Naive thymus-derived CD4-positive, alpha-beta T cell (primary cell): ENCODE measurements at regions of chr14 and their contacts with region 1.

Region 1: DNA sequence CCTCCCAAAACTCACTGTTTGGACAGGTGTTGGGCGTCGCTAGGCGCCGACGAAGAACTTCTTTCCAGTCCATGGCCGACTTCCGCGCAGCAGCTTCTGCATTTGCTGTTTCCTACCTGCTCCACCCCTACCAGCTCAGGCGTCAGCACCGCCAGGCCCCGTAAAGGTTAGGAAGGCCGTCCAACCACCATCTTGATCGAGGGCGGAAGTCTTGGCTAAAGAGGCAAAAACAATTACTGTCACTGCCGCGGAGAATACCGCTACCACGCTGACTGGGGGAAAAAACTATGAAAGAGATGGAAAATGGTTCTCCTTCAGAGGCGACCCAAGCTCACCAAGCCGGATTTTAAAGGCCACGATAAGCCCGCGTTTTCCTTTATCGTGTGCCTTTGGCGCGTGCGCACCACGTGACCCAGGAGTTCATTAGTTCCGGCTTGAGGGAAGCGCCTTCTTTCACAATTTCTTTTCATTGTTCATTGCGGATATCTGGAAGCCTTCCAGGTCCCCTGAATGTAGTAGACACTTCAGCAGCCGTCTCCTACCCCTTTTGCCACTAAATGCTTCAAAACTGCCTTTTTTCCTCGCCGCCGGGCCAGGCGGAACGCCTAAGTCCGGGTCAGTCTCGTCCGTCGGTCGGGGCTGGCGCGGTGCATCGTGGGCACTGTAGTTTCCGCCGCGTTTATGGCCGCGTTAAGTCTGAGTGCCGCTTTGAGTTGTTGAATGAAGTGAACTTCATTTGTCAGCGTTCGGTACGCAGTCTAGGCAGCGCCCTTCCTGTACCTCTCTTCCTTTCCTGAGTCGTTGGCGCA is at the starts of genes PPP2R3C and PRORP:
- DNase-seq: peak; percentile 80 to 96 (median 93)
- ATAC-seq: peak; percentile 90
- H3K4me3 ChIP-seq: peak within 1 kb of the TSS; percentile 86
- H3K4me3 Mint-ChIP-seq: peak within 1 kb of the TSS; percentile 89 to 100 (median 99)
- H3K27ac ChIP-seq: peak within 1 kb of the TSS; percentile 97
- H3K27ac Mint-ChIP-seq: peak within 1 kb of the TSS; percentile 99 to 100 (median 100)
- H3K4me1 ChIP-seq: peaks cover 16 to 22% of the 10 kb centered on the region in 2 donors
- H3K4me1 Mint-ChIP-seq: peaks cover 39 to 85% (median 73%) of the 10 kb centered on the region in 7 donors
- H3K27me3 ChIP-seq: no peaks in the 10 kb centered on the region
- H3K27me3 Mint-ChIP-seq: peaks cover 0 to 3% (median 0%) of the 10 kb centered on the region in 5 donors
- total RNA-seq, gene PPP2R3C: 31.4 to 43.3 (median 33.5) TPM
- total RNA-seq, gene PRORP: 31.2 to 40.9 (median 38.4) TPM

Region 2: GRCh38 chr14:34554540-34555333 is 567.4 kb before region 1 on chr14:
- CTCF ChIA-PET with region 1: no interaction called
- POLR2A ChIA-PET with region 1: no interaction called
- intact Hi-C with region 1: no loop called
- DNase-seq: peak in 1 of 9 donors; percentile 34
- ATAC-seq: no peak
- H3K4me3 ChIP-seq: no peak overlapping the region
- H3K4me3 Mint-ChIP-seq: peak overlapping the region; percentile 42 to 85 (median 64)
- H3K27ac ChIP-seq: peak overlapping the region; percentile 1
- H3K27ac Mint-ChIP-seq: peak overlapping the region; percentile 48 to 94 (median 79)
- H3K4me1 ChIP-seq: no peaks in the 10 kb centered on the region
- H3K4me1 Mint-ChIP-seq: peaks cover 1 to 20% (median 17%) of the 10 kb centered on the region in 7 donors
- H3K27me3 ChIP-seq: no peaks in the 10 kb centered on the region
- H3K27me3 Mint-ChIP-seq: no peaks in the 10 kb centered on the region

Region 3: GRCh38 chr14:34629657-34630529 is 492.2 kb before region 1 on chr14 and contains the start of gene SNX6:
- CTCF ChIA-PET with region 1: no interaction called
- POLR2A ChIA-PET with region 1: interaction called, 5 read pairs
- intact Hi-C with region 1: loop called (anchors 1 kb)
- DNase-seq: peak; percentile 75 to 87 (median 83)
- ATAC-seq: peak; percentile 100
- H3K4me3 ChIP-seq: peak within 1 kb of the TSS; percentile 72
- H3K4me3 Mint-ChIP-seq: peak within 1 kb of the TSS; percentile 89 to 100 (median 98)
- H3K27ac ChIP-seq: peak within 1 kb of the TSS; percentile 98
- H3K27ac Mint-ChIP-seq: peak within 1 kb of the TSS; percentile 92 to 97 (median 96)
- H3K4me1 ChIP-seq: peaks cover 17 to 20% of the 10 kb centered on the region in 2 donors
- H3K4me1 Mint-ChIP-seq: peaks cover 6 to 49% (median 33%) of the 10 kb centered on the region in 7 donors
- H3K27me3 ChIP-seq: no peaks in the 10 kb centered on the region
- H3K27me3 Mint-ChIP-seq: peaks cover 0 to 18% (median 0%) of the 10 kb centered on the region in 5 donors
- total RNA-seq, gene SNX6: 56.6 to 78.9 (median 59.7) TPM

Region 4: GRCh38 chr14:35046048-35046741 is 75.9 kb before region 1 on chr14 and contains the start of gene FAM177A1:
- CTCF ChIA-PET with region 1: no interaction called
- POLR2A ChIA-PET with region 1: interaction called, 23 read pairs
- intact Hi-C with region 1: loop called (anchors 1 kb)
- DNase-seq: peak; percentile 89 to 100 (median 98)
- ATAC-seq: peak; percentile 94
- H3K4me3 ChIP-seq: peak within 1 kb of the TSS; percentile 80
- H3K4me3 Mint-ChIP-seq: peak within 1 kb of the TSS; percentile 88 to 99 (median 93)
- H3K27ac ChIP-seq: peak within 1 kb of the TSS; percentile 99
- H3K27ac Mint-ChIP-seq: peak within 1 kb of the TSS; percentile 96 to 100 (median 99)
- H3K4me1 ChIP-seq: peaks cover 11 to 19% of the 10 kb centered on the region in 2 donors
- H3K4me1 Mint-ChIP-seq: peaks cover 13 to 39% (median 34%) of the 10 kb centered on the region in 7 donors
- H3K27me3 ChIP-seq: no peaks in the 10 kb centered on the region
- H3K27me3 Mint-ChIP-seq: no peaks in the 10 kb centered on the region
- total RNA-seq, gene FAM177A1: 34.3 to 135 (median 41.7) TPM

Region 5: GRCh38 chr14:35201066-35201465 is 79.0 kb after region 1 on chr14:
- CTCF ChIA-PET with region 1: no interaction called
- POLR2A ChIA-PET with region 1: no interaction called
- intact Hi-C with region 1: loop called in 1 of 2 experiments (anchors 5 kb)
- DNase-seq: peak in 5 of 9 donors; percentile 7 to 30 (median 18)
- ATAC-seq: peak; percentile 48
- H3K4me3 ChIP-seq: no peak overlapping the region
- H3K4me3 Mint-ChIP-seq: peak overlapping the region in 9 of 10 donors; percentile 2 to 54 (median 34)
- H3K27ac ChIP-seq: peak overlapping the region; percentile 35
- H3K27ac Mint-ChIP-seq: peak overlapping the region in 8 of 9 donors; percentile 49 to 89 (median 68)
- H3K4me1 ChIP-seq: peaks cover 17 to 35% of the 10 kb centered on the region in 2 donors
- H3K4me1 Mint-ChIP-seq: peaks cover 23 to 52% (median 38%) of the 10 kb centered on the region in 7 donors
- H3K27me3 ChIP-seq: no peaks in the 10 kb centered on the region
- H3K27me3 Mint-ChIP-seq: no peaks in the 10 kb centered on the region

Region 6: DNA sequence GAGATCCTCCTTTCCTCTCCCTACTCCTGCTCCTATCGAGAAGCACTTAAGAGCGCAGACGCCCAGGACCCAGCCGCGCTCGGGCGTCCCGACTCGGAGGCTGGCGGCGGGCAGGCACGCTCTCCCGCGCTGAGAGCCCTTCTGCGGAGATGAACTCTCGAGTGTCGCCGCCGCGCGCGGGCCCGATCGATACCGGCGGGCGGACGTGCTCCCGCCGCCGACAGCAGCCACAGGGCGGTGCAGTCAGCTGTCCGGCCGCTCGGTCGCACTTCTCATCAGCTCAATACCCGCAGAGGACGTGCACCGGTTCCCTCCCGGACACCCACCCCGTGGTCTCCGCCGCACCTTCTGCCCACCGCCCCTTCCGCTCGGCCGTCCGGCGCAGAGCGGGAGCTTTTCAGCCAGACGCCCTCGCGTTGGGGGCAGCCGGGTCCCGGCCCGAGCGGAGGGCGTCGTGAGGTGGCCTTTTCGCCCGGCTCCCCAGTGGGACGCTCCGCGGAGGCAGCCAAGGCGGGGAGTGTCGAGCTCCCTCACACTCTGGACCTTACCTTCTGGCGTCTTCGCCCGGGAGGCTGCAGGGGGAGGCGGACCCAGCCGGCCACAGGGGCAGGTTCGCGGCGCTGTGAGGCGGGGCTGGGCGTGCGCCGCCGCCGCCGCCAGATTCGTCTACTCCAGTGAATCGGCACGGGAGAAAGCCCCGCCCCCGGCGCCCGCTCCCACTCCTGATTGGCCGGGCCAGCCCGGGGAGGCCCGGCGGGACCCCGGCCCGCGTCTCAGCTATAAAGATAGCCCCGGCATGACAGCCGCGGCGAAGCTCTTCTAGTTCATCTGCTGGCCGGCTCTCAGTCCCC is 411.5 kb after region 1 on chr14 and contains the start of gene INSM2:
- CTCF ChIA-PET with region 1: no interaction called
- POLR2A ChIA-PET with region 1: no interaction called
- intact Hi-C with region 1: loop called in 1 of 2 experiments (anchors 10 kb)
- DNase-seq: peak in 8 of 9 donors; percentile 9 to 76 (median 21)
- ATAC-seq: peak; percentile 65
- H3K4me3 ChIP-seq: peak within 1 kb of the TSS; percentile 49
- H3K4me3 Mint-ChIP-seq: peak within 1 kb of the TSS; percentile 74 to 86 (median 82)
- H3K27ac ChIP-seq: no peak within 1 kb of the TSS
- H3K27ac Mint-ChIP-seq: no peak within 1 kb of the TSS
- H3K4me1 ChIP-seq: peaks cover 0 to 7% of the 10 kb centered on the region in 2 donors
- H3K4me1 Mint-ChIP-seq: peaks cover 0 to 23% (median 13%) of the 10 kb centered on the region in 7 donors
- H3K27me3 ChIP-seq: peaks cover 3 to 11% of the 10 kb centered on the region in 2 donors
- H3K27me3 Mint-ChIP-seq: peaks cover 53 to 81% (median 60%) of the 10 kb centered on the region in 5 donors
- total RNA-seq, gene INSM2: not detected

Region 7: DNA sequence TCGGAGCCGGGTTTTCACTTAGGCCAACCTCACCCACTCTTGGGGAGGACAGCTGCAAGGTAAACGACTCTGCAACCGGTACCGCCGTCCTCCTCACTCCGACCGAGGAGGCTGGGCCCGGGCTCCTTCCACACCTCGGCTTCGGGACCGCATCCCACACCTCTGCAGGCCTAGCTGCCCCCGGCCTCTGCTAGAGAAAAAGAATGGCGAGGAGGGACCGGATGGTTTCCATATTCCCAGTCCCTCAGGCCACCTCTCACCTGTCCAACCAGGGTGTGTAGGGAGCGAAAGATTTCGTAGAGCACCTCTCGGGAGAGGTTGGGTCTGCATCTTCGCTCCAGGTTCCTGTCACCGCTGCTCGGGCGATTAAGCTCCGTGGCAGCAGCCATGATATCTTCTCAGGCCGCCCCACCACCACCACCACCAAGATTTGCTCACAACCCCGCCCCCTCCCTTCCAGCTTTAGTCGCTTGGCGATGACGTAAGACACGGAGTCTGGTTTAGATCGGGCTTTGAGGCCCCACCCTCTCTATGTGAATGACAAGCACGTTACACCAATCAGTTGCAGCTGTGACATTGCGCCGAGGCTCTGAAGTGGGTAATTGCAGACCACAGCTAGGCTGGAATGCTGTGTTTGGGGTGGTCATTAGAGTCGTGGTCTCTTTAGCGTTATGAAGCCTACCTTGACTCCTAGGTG is 1198.3 kb after region 1 on chr14 and contains the start of gene MBIP:
- CTCF ChIA-PET with region 1: no interaction called
- POLR2A ChIA-PET with region 1: no interaction called
- intact Hi-C with region 1: loop called in 1 of 2 experiments (anchors 1 kb)
- DNase-seq: peak; percentile 65 to 96 (median 85)
- ATAC-seq: peak; percentile 99
- H3K4me3 ChIP-seq: peak within 1 kb of the TSS; percentile 97
- H3K4me3 Mint-ChIP-seq: peak within 1 kb of the TSS; percentile 88 to 99 (median 98)
- H3K27ac ChIP-seq: peak within 1 kb of the TSS; percentile 81
- H3K27ac Mint-ChIP-seq: peak within 1 kb of the TSS; percentile 90 to 97 (median 95)
- H3K4me1 ChIP-seq: peaks cover 4 to 12% of the 10 kb centered on the region in 2 donors
- H3K4me1 Mint-ChIP-seq: peaks cover 16 to 52% (median 46%) of the 10 kb centered on the region in 7 donors
- H3K27me3 ChIP-seq: no peaks in the 10 kb centered on the region
- H3K27me3 Mint-ChIP-seq: peaks cover 6 to 25% (median 10%) of the 10 kb centered on the region in 5 donors
- total RNA-seq, gene MBIP: 22.5 to 42.7 (median 24.6) TPM

Region 8: DNA sequence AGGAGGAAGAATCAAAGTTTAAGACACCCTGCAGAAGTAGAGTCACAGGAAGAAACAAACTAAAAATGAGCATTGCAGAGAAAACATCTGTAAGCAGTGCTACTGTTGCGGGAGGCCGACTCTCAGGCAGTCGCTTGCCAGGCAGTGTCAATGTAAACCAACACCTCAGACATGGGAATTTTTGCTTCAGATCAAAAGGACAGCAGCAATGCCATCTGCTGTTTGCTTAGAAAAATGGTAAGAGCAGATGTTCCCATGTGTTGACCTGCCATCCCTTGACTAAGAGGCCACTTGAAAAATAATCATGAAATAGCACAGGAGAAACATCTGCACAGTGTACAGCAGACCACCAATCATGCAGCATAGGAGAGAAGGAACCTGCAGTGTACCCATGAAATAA is 1853.7 kb after region 1 on chr14:
- CTCF ChIA-PET with region 1: no interaction called
- POLR2A ChIA-PET with region 1: no interaction called
- intact Hi-C with region 1: no loop called
- DNase-seq: no peak
- ATAC-seq: peak; percentile 14
- H3K4me3 ChIP-seq: no peak overlapping the region
- H3K4me3 Mint-ChIP-seq: no peak overlapping the region
- H3K27ac ChIP-seq: no peak overlapping the region
- H3K27ac Mint-ChIP-seq: no peak overlapping the region
- H3K4me1 ChIP-seq: no peaks in the 10 kb centered on the region
- H3K4me1 Mint-ChIP-seq: no peaks in the 10 kb centered on the region
- H3K27me3 ChIP-seq: no peaks in the 10 kb centered on the region
- H3K27me3 Mint-ChIP-seq: peaks cover 0 to 3% (median 0%) of the 10 kb centered on the region in 5 donors